ENCODE measurements at regions of chr17 and their contacts with region 1.

Region 1: GRCh38 chr17:29107941-29108419 is 65.0 kb downstream of the PIPOX start:
- DNase-seq: no peak
- H3K4me3 ChIP-seq: no peak overlapping the region
- H3K27ac ChIP-seq: no peak overlapping the region
- H3K4me1 ChIP-seq: no peaks in the 10 kb centered on the region
- H3K27me3 ChIP-seq: no peaks in the 10 kb centered on the region

Region 2: DNA sequence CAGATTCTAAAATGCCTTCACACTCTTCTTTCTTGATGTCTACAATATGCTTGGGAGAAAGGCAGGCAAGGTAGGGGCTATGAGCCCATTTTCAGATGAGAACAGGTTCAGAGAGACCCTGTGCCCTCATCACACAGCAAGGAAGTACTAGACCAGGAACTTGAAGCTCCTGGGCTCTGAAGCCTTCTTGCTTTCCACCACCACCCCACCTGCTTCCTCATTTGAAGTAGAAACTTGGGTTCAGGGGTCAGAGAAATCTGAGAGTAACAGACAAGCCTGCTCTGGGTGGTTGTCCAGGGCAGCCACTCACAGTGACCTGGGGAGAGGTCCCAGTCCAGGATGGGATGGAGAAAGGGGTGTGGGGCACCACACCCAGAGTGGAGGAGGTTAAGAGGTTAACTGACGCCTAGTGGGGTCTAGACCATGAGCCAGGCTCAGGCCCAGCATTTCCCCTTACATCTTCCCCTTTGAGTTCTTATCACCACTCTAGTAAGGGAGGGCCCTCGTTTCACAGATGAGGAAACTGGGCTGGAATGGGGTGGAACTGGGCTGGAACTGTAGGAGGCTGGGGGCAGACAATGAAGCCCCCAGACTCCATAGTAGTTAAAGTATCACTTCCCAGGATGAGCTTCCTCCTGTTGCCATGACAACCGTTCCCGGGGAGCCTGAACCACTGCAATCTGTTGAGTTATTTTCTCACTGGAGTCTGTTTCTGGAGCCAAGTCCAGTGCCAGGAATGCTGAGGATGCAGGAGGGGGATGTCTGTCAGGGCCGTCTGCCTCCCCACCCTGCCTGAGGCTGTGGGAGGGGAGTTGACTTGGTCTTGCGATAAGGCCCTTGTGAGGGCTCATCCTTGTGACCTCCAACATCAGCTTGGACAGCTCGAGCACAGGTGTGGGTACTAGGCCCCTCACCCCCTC is 140.5 kb before region 1 on chr17:
- in situ Hi-C with region 1: loop called (anchors 5 kb)
- DNase-seq: no peak
- H3K4me3 ChIP-seq: no peak overlapping the region
- H3K27ac ChIP-seq: no peak overlapping the region
- H3K4me1 ChIP-seq: 0 out of 2 replicates have a peak, but pooled peaks cover 5% of the 10 kb centered on the region
- H3K27me3 ChIP-seq: peaks cover 11% of the 10 kb centered on the region; the same call in 1 of the 2 replicates

Region 3: DNA sequence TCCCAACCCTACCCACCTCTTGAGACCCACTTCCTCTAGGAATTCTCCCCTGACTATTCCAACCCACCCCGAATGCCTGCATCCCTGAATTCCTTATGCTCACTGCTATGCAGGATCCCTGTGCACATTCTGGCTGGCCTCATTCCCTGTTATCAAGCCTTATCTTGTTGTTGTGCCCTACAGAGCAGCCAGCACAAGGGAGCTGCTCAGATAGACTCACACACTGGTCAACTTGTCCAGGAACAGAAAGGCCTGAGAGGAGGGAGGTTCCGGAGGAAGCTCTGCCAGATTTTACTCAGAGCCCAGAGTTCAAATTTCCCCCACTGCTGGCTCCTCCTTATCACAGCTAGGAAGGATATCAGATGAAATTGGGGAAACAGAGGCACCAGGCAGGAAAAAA is 97.1 kb after region 1 on chr17:
- in situ Hi-C with region 1: no loop called
- DNase-seq: no peak
- H3K4me3 ChIP-seq: no peak overlapping the region
- H3K27ac ChIP-seq: no peak overlapping the region
- H3K4me1 ChIP-seq: no peaks in the 10 kb centered on the region
- H3K27me3 ChIP-seq: no peaks in the 10 kb centered on the region